K562 (cell line): ENCODE measurements at regions of chr12 and their contacts with region 1.

Region 1: DNA sequence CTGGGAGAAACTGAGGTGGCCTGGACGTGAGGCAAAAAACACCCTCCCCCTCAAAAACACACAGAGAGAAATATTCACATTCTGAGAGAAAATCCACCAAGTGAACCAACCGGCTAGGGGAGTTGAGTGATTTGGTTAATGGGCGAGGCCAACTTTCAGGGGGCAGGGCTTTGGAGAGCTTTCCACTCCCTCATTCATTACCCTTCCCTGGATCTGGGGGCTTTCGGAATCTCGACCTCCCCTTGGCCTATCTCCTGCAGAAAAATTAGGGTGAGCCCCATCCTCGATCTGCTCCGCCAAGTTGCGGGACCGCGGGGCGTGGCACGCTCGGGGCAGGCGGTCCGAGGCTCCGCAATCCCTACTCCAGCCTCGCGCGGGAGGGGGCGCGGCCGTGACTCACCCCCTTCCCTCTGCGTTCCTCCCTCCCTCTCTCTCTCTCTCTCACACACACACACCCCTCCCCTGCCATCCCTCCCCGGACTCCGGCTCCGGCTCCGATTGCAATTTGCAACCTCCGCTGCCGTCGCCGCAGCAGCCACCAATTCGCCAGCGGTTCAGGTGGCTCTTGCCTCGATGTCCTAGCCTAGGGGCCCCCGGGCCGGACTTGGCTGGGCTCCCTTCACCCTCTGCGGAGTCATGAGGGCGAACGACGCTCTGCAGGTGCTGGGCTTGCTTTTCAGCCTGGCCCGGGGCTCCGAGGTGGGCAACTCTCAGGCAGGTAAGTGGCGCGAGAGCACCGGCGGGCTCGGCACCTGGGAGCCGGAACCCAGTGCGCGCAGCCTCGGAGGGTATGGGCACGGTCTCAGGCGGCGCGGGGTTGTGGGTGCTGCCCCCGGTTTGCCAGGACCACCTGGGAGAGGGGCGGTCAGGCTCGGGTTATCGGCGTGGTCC is at the start of gene ERBB3:
- DNase-seq: peak; percentile 90 to 94 (median 94)
- ATAC-seq: peak; percentile 91
- H3K4me3 ChIP-seq: peak within 1 kb of the TSS; percentile 51
- H3K27ac ChIP-seq: no peak within 1 kb of the TSS
- H3K4me1 ChIP-seq: peaks cover 31 to 40% of the 10 kb centered on the region in 2 experiments
- H3K27me3 ChIP-seq: no peaks in the 10 kb centered on the region
- CTCF ChIP-seq: no peak; a peak in 1 of 6 replicates
- EP300 ChIP-seq: no peak; the same call in 1 of the 2 replicates
- POLR2A ChIP-seq: peak; percentile 36; the same call in 1 of the 2 replicates
- RAD21 ChIP-seq: no peak
- polyA plus RNA-seq, gene ERBB3: 1.5 to 1.8 TPM

Region 2: GRCh38 chr12:55607821-55608594 is 471.9 kb before region 1 on chr12:
- CTCF ChIA-PET with region 1: no interaction called
- POLR2A ChIA-PET with region 1: no interaction called
- in situ Hi-C with region 1: no loop called
- intact Hi-C with region 1: no loop called
- DNase-seq: no peak
- ATAC-seq: no peak
- H3K4me3 ChIP-seq: no peak overlapping the region
- H3K27ac ChIP-seq: no peak overlapping the region
- H3K4me1 ChIP-seq: no peaks in the 10 kb centered on the region
- H3K27me3 ChIP-seq: no peaks in the 10 kb centered on the region
- CTCF ChIP-seq: no peak
- EP300 ChIP-seq: no peak
- POLR2A ChIP-seq: no peak
- RAD21 ChIP-seq: no peak

Region 3: GRCh38 chr12:56104109-56104814 is 24.4 kb after region 1 on chr12 and contains the start of gene PA2G4:
- CTCF ChIA-PET with region 1: no interaction called
- POLR2A ChIA-PET with region 1: interaction called, 10 read pairs
- in situ Hi-C with region 1: no loop called
- intact Hi-C with region 1: loop called (anchors 2 kb)
- DNase-seq: peak; percentile 90 to 99 (median 94)
- ATAC-seq: peak; percentile 97
- H3K4me3 ChIP-seq: peak within 1 kb of the TSS; percentile 97
- H3K27ac ChIP-seq: peak within 1 kb of the TSS; percentile 99
- H3K4me1 ChIP-seq: peaks cover 11 to 25% of the 10 kb centered on the region in 2 experiments; a peak in 4 of 5 replicates
- H3K27me3 ChIP-seq: no peaks in the 10 kb centered on the region
- CTCF ChIP-seq: no peak; a peak in 1 of 6 replicates
- EP300 ChIP-seq: no peak
- POLR2A ChIP-seq: peak; percentile 94
- RAD21 ChIP-seq: no peak
- polyA plus RNA-seq, gene PA2G4: 230 to 303 TPM

Region 4: DNA sequence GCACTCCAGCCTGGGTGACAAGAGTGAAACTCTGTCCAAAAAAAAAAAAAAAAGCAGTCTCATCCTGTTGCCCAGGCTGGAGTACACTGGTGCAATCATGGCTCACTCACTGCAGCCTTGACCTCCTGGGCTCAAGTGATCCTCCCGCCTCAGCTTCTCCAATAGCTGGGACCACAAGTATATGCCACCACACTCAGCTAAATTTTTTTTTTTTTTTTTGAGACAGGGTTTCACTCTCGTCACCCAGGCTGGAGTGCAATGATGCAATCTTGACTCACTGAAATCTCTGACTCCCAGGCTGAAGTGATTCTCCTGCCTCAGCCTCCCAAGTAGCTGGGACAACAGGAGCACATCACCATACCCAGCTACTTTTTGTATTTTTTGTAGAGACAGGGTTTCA is 241.1 kb after region 1 on chr12:
- CTCF ChIA-PET with region 1: no interaction called
- POLR2A ChIA-PET with region 1: no interaction called
- in situ Hi-C with region 1: no loop called
- intact Hi-C with region 1: no loop called
- DNase-seq: no peak
- ATAC-seq: no peak
- H3K4me3 ChIP-seq: no peak overlapping the region
- H3K27ac ChIP-seq: no peak overlapping the region
- H3K4me1 ChIP-seq: peaks cover 5% of the 10 kb centered on the region in 2 experiments; a peak in 4 of 5 replicates
- H3K27me3 ChIP-seq: no peaks in the 10 kb centered on the region
- CTCF ChIP-seq: no peak
- EP300 ChIP-seq: no peak
- POLR2A ChIP-seq: no peak
- RAD21 ChIP-seq: no peak

Region 5: GRCh38 chr12:56461235-56462159 is 381.6 kb after region 1 on chr12:
- CTCF ChIA-PET with region 1: no interaction called
- POLR2A ChIA-PET with region 1: no interaction called
- in situ Hi-C with region 1: no loop called
- intact Hi-C with region 1: no loop called
- DNase-seq: no peak
- ATAC-seq: peak; percentile 52
- H3K4me3 ChIP-seq: no peak overlapping the region
- H3K27ac ChIP-seq: peak overlapping the region; percentile 40; the same call in 2 of the 3 replicates
- H3K4me1 ChIP-seq: peaks cover 10 to 11% of the 10 kb centered on the region in 2 experiments; a peak in 4 of 5 replicates
- H3K27me3 ChIP-seq: no peaks in the 10 kb centered on the region
- CTCF ChIP-seq: no peak
- EP300 ChIP-seq: no peak
- POLR2A ChIP-seq: no peak
- RAD21 ChIP-seq: no peak